Natural killer cell (primary cell): ENCODE measurements at regions of chr16 and their contacts with region 1.

Region 1: DNA sequence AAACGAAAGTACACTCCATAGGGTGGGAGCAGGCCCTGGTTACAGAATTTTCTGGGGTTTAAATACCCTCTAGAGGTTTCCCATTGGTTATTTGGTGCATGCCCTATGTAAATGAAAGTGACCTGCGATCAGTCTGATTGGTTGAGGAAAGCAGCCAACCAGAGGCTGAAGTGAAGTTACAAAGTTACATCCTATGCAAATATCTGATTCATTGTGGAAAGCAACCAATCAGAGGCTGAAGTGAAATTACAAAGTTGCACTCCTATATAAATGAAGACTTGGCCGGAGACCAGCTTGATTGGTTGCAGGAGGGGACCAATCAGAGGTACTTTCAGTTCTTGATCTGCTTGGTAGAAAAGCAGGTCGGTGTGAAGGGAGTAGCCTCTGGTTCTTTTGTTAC is 24.4 kb downstream of the NAA60 start:
- DNase-seq: no peak
- ATAC-seq: peak in 1 of 3 donors; percentile 17
- H3K4me3 ChIP-seq: no peak overlapping the region
- H3K4me3 Mint-ChIP-seq: no peak overlapping the region
- H3K27ac ChIP-seq: no peak overlapping the region
- H3K27ac Mint-ChIP-seq: peak overlapping the region; percentile 66 to 73
- H3K4me1 ChIP-seq: peaks cover 27% of the 10 kb centered on the region
- H3K4me1 Mint-ChIP-seq: peaks cover 44 to 61% of the 10 kb centered on the region in 2 donors
- H3K27me3 ChIP-seq: no peaks in the 10 kb centered on the region
- H3K27me3 Mint-ChIP-seq: no peaks in the 10 kb centered on the region
- CTCF ChIP-seq: no peak

Region 2: GRCh38 chr16:2897113-2897512 is 570.8 kb before region 1 on chr16:
- intact Hi-C with region 1: no loop called
- DNase-seq: no peak
- ATAC-seq: no peak
- H3K4me3 ChIP-seq: no peak overlapping the region
- H3K4me3 Mint-ChIP-seq: no peak overlapping the region
- H3K27ac ChIP-seq: no peak overlapping the region
- H3K27ac Mint-ChIP-seq: no peak overlapping the region
- H3K4me1 ChIP-seq: no peaks in the 10 kb centered on the region
- H3K4me1 Mint-ChIP-seq: no peaks in the 10 kb centered on the region
- H3K27me3 ChIP-seq: no peaks in the 10 kb centered on the region
- H3K27me3 Mint-ChIP-seq: no peaks in the 10 kb centered on the region
- CTCF ChIP-seq: no peak

Region 3: GRCh38 chr16:3182608-3183444 is 285.1 kb before region 1 on chr16:
- intact Hi-C with region 1: loop called (anchors 10 kb)
- DNase-seq: peak in 1 of 2 donors; percentile 70
- ATAC-seq: peak; percentile 69 to 81 (median 80)
- H3K4me3 ChIP-seq: peak overlapping the region; percentile 32
- H3K4me3 Mint-ChIP-seq: peak overlapping the region; percentile 83
- H3K27ac ChIP-seq: no peak overlapping the region
- H3K27ac Mint-ChIP-seq: peak overlapping the region; percentile 78 to 82
- H3K4me1 ChIP-seq: peaks cover 23% of the 10 kb centered on the region
- H3K4me1 Mint-ChIP-seq: peaks cover 27 to 28% of the 10 kb centered on the region in 2 donors
- H3K27me3 ChIP-seq: peaks cover 37% of the 10 kb centered on the region
- H3K27me3 Mint-ChIP-seq: peaks cover 65 to 73% of the 10 kb centered on the region in 2 donors
- CTCF ChIP-seq: peak; percentile 54